Astrocyte of the cerebellum (primary cell): ENCODE measurements at regions of chr12 and their contacts with region 1.

Region 1: GRCh38 chr12:75641031-75641780 is 129.8 kb upstream of the KRR1 start:
- DNase-seq: peak; percentile 73
- H3K4me3 ChIP-seq: no peak overlapping the region
- CTCF ChIP-seq: no peak

Region 2: GRCh38 chr12:75579552-75579951 is 61.7 kb before region 1 on chr12:
- in situ Hi-C with region 1: loop called (anchors 5 kb)
- DNase-seq: no peak
- H3K4me3 ChIP-seq: no peak overlapping the region
- CTCF ChIP-seq: no peak

Region 3: DNA sequence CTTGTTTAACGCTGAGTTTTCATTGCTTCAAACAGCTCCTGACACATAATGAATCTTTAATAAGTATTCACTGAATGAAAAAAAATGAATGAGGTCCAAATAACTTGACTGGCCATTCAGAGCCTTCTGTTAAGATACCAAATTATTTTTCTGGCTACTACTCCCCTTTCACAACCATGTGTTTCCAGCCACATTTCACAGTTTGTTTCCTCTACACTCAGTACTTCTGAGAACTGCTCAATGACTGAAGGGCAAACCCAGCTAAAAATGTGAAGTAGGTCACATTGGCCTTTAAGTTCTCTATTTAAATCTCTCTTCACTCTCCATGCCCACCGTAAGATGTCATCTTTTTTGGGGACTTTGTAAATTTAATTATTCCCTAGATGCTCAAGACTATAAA is 51.4 kb before region 1 on chr12:
- in situ Hi-C with region 1: no loop called
- DNase-seq: no peak
- H3K4me3 ChIP-seq: no peak overlapping the region
- CTCF ChIP-seq: no peak